Esophagus muscularis mucosa (tissue), 4 donors: ENCODE measurements at regions of chr1 and their contacts with region 1.

Region 1: GRCh38 chr1:43348809-43349583 is 9.8 kb upstream of the CDC20 start:
- DNase-seq: peak; percentile 92
- H3K4me3 ChIP-seq: peak overlapping the region; percentile 62 to 73 (median 70)
- H3K27ac ChIP-seq: peak overlapping the region; percentile 87 to 94 (median 90)
- H3K4me1 ChIP-seq: peaks cover 22 to 37% (median 23%) of the 10 kb centered on the region in 4 donors
- H3K27me3 ChIP-seq: no peaks in the 10 kb centered on the region
- CTCF ChIP-seq: peak in 1 of 3 experiments; percentile 4
- EP300 ChIP-seq: no peak
- POLR2A ChIP-seq: no peak

Region 2: DNA sequence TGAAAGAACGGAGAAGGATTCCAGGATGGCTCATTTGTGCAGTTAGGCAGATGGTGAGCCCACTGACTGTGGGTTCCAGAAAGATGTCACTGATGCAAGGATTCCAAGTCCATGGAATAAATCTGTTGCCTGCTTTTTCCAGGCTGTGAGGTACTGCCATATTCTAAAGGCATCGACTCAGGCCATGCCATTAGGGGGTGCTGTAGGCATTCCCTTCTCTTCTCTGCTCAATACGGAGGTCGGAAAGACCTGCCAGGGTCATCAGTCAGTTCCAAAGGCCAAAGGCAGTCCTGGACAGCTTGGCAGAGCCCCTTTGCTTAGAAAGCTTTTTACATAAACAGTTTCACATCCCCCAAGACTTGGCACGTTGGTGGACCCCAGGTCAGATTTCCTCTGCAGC is 110.9 kb before region 1 on chr1:
- intact Hi-C with region 1: loop called (anchors 10 kb)
- DNase-seq: no peak
- H3K4me3 ChIP-seq: no peak overlapping the region
- H3K27ac ChIP-seq: no peak overlapping the region
- H3K4me1 ChIP-seq: peaks cover 11 to 23% (median 17%) of the 10 kb centered on the region in 4 donors
- H3K27me3 ChIP-seq: no peaks in the 10 kb centered on the region
- CTCF ChIP-seq: peak; percentile 57 to 73 (median 68)
- EP300 ChIP-seq: no peak
- POLR2A ChIP-seq: no peak

Region 3: DNA sequence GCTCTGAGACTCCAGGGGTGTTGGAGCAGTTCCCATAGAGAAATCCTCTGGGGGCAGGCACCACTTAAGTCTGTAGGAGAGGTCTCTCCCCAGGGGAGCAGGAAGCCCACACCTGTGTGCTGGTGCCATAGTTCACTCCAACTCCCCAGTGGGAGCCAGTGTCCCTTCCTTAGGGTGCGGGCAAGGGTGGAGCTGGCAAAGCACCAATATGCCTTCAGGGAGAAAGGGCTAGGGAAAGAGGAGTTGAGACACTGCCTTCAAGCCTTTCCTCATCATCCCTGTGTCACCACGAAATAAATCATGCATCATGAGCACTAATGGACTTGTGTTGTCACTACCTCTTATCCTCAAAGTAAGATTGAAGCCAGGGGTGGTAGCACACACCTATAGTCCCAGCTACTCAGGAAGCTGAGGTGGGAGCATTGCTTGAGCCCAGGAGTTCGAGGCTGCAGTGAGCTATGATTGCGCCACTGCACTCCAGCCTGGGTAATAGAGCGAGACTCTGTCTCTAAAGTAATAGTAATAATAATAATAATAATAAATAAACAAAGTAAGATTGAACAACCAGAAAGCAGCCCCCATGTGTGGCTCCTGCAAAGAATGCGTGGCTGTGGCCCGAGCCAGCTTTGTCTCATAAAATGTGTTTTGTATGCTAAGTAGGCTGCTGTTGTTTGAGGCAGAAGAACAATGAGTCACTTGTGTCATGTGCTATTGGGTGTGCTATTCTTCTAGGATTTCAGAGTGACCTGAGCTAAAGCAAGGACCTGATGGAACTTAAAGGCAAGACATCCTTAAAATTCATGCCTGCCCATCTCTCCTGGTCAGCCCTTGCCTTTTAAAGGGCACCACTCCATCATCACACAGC is 54.9 kb before region 1 on chr1:
- intact Hi-C with region 1: loop called (anchors 5 kb)
- DNase-seq: no peak
- H3K4me3 ChIP-seq: no peak overlapping the region
- H3K27ac ChIP-seq: peak overlapping the region; percentile 69 to 84 (median 79)
- H3K4me1 ChIP-seq: peaks cover 38 to 45% (median 43%) of the 10 kb centered on the region in 4 donors
- H3K27me3 ChIP-seq: no peaks in the 10 kb centered on the region
- CTCF ChIP-seq: no peak
- EP300 ChIP-seq: no peak
- POLR2A ChIP-seq: no peak

Region 4: GRCh38 chr1:43317817-43318471 is 31.1 kb before region 1 on chr1:
- intact Hi-C with region 1: no loop called
- DNase-seq: no peak
- H3K4me3 ChIP-seq: no peak overlapping the region
- H3K27ac ChIP-seq: no peak overlapping the region
- H3K4me1 ChIP-seq: no peaks in the 10 kb centered on the region
- H3K27me3 ChIP-seq: no peaks in the 10 kb centered on the region
- CTCF ChIP-seq: no peak
- EP300 ChIP-seq: no peak
- POLR2A ChIP-seq: no peak

Region 5: DNA sequence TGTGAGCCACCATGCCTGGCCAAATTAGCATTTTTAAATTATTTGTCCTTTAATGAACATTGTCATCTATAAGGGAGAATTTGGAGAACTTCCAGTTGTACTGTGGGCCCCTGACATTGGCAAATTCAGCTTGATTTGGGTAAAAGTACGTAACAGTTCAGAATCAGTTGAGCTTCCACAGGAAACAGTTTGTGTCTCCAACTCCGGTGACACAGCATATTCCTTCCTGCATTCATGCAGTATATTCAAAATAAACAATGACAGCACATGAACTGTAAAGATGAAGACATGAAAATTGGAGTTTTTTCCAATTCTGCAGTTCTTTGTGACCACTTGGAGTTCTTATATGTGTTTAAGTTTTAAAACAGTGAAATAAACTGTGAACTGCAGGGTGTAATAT is 1084.2 kb after region 1 on chr1:
- intact Hi-C with region 1: no loop called
- DNase-seq: no peak
- H3K4me3 ChIP-seq: no peak overlapping the region
- H3K27ac ChIP-seq: no peak overlapping the region
- H3K4me1 ChIP-seq: no peaks in the 10 kb centered on the region
- H3K27me3 ChIP-seq: peaks cover 0 to 23% (median 0%) of the 10 kb centered on the region in 4 donors
- CTCF ChIP-seq: no peak
- EP300 ChIP-seq: no peak
- POLR2A ChIP-seq: no peak